A673 (cell line): ENCODE measurements at regions of chr5 and their contacts with region 1.

Region 1: GRCh38 chr5:123671042-123671441 is 159.1 kb downstream of the CSNK1G3 start:
- DNase-seq: peak; percentile 62
- H3K4me3 ChIP-seq: no peak overlapping the region
- H3K27ac ChIP-seq: no peak overlapping the region
- H3K4me1 ChIP-seq: peaks cover 7% of the 10 kb centered on the region
- H3K27me3 ChIP-seq: no peaks in the 10 kb centered on the region
- CTCF ChIP-seq: peak; percentile 87

Region 2: DNA sequence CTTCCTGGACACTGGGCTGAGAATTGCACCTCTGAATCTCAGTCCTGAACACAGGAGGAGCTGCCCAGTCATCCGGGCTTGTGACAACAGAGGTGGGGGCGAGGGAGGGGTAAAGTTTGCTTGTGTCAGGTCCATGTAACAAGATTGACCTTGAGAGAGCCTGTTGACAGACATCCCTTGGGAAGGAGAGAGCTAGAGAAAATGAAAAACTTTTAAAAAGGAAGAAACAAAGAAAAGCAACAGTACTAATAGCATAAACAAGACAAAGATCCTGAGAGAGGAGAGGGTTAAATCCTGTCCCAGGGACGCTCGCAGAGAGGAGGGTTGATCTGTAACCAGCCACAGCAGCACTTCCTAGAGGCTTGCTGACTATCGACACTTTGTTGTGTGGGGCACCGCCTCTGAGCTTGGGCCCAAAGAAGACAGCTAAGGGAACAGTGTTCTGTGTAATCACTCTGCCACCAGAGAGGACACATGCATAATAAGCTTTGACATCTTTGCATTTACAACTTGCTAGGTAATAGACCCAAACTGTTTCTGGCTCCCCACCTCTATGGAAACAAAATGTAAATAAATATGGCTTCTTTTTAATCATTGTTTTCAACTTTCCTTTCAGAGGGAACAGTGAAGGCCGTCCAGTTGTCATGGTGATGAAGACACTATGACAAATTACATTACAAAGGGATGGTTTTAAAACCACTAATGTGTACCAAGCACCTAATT is 204.7 kb after region 1 on chr5:
- CTCF ChIA-PET with region 1: no interaction called
- POLR2A ChIA-PET with region 1: no interaction called
- intact Hi-C with region 1: loop called (anchors 5 kb)
- DNase-seq: peak; percentile 83
- H3K4me3 ChIP-seq: peak overlapping the region; percentile 24
- H3K27ac ChIP-seq: peak overlapping the region; percentile 79
- H3K4me1 ChIP-seq: peaks cover 40% of the 10 kb centered on the region
- H3K27me3 ChIP-seq: no peaks in the 10 kb centered on the region
- CTCF ChIP-seq: 0 out of 2 replicates have a peak, but pooled peaks have one; percentile 16

Region 3: DNA sequence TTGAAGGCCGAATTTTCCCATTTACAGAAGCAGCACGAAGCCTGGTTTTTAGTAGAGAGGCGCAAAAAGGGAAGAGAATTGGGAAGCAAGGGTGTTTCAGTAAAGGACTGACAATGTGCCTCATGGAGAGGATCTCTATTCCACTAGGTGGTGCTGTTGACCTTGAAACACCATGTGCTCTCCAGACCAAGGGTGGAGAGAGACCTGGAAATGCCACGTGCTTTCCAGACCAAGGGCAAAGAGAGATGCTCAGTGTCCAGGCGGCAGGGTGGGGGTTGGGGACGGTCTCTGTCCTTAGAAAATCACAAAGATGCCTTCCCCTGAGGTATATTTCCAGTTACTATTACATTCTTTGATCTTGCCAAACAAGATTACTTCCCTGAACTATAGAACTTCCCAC is 266.2 kb after region 1 on chr5:
- CTCF ChIA-PET with region 1: no interaction called
- POLR2A ChIA-PET with region 1: no interaction called
- intact Hi-C with region 1: loop called (anchors 5 kb)
- DNase-seq: peak; percentile 64
- H3K4me3 ChIP-seq: no peak overlapping the region
- H3K27ac ChIP-seq: no peak overlapping the region
- H3K4me1 ChIP-seq: no peaks in the 10 kb centered on the region
- H3K27me3 ChIP-seq: no peaks in the 10 kb centered on the region
- CTCF ChIP-seq: peak; percentile 50; the same call in 1 of the 2 replicates

Region 4: DNA sequence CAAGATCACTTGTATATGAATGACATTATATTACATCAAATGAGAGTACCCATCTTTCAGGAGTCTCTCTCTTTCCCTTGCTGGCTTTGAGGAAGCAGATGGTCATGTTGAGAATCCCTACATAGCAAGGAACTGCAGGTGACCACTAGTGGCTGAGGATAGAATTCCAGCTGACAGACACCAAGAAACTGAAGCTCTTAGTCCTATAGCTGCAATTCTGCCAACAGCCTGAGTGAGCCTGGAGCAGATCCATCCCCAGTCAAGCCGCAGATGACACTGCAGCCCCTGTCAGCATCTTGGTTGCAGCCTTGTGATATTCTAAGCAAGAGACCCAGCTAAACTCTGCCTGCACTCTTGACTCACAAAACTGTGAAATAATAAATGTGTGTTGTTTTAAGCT is 372.4 kb after region 1 on chr5:
- CTCF ChIA-PET with region 1: no interaction called
- POLR2A ChIA-PET with region 1: no interaction called
- intact Hi-C with region 1: loop called (anchors 10 kb)
- DNase-seq: peak; percentile 23
- H3K4me3 ChIP-seq: no peak overlapping the region
- H3K27ac ChIP-seq: no peak overlapping the region
- H3K4me1 ChIP-seq: no peaks in the 10 kb centered on the region
- H3K27me3 ChIP-seq: no peaks in the 10 kb centered on the region
- CTCF ChIP-seq: peak; percentile 27; the same call in 1 of the 2 replicates

Region 5: DNA sequence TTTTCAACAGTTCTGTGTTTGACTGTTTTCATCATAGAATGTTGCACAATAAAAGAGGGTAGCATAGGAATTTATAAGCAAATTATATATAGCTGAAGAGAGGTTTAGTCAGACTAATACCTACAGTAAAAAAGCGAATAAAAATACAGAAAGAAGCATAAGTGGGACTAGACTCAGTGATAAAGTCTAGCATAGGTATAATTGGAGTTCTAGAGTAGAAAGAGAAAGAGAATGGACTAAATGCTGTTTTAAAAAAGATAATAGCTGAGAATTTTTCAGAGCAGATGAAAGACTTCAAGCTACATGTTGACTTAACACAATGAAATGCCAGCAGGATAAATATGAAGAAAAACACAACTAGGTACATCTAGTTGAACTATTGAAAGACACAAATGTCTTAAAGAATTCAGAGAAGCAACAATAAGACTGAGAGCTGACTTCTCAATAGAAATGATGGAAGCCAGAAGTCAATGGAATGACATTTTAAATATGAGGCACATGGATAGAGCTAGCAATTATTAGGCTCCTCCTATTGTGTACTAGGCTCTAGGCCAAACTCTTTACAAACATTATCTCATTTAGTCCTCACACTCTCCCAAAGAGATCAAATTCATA is 501.5 kb after region 1 on chr5:
- CTCF ChIA-PET with region 1: no interaction called
- POLR2A ChIA-PET with region 1: no interaction called
- intact Hi-C with region 1: no loop called
- DNase-seq: no peak
- H3K4me3 ChIP-seq: no peak overlapping the region
- H3K27ac ChIP-seq: no peak overlapping the region
- H3K4me1 ChIP-seq: no peaks in the 10 kb centered on the region
- H3K27me3 ChIP-seq: no peaks in the 10 kb centered on the region
- CTCF ChIP-seq: no peak

Region 6: DNA sequence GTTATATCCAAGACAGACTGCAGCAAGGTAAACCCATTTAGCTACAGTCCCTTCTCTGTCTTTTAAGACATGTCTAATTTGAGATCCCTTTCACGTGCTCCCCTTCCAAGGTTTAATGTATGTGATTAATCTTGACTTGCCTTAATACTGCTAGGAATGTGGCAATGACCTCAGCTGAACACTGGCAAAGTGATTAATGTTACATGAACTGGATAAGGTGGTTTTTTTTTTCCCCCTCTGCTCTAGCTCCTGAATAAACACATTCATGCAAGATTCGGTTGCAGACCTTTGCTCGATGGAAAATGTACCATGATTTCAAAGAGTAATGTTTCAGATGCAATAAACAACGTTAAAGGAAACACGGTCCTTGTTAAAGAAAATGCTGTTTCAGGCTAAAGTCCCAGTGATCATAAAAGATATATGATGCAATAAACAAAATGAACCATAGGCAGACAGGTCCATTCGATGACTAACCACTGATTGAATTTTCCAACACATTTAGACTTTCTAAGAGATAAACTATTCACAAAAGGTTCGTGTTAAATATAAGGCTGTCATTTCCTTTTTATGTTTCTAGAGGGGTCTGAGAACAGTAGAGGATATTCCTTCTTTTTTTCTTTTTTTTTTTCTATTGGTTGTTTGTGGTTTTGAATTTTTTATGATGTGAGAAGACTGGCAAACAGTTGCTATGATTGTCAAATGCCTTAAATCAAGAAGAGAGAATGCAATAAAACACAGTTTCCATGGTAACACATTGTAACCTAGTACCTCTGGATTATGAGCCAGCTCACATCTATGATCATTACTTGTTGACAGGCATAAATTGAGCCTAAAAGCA is 1120.1 kb after region 1 on chr5:
- CTCF ChIA-PET with region 1: interaction called, 17 read pairs
- POLR2A ChIA-PET with region 1: no interaction called
- intact Hi-C with region 1: no loop called
- DNase-seq: peak; percentile 11
- H3K4me3 ChIP-seq: no peak overlapping the region
- H3K27ac ChIP-seq: no peak overlapping the region
- H3K4me1 ChIP-seq: no peaks in the 10 kb centered on the region
- H3K27me3 ChIP-seq: no peaks in the 10 kb centered on the region
- CTCF ChIP-seq: no peak

Region 7: GRCh38 chr5:124902097-124902821 is 1231.2 kb after region 1 on chr5:
- CTCF ChIA-PET with region 1: no interaction called
- POLR2A ChIA-PET with region 1: no interaction called
- intact Hi-C with region 1: loop called (anchors 10 kb)
- DNase-seq: peak; percentile 77
- H3K4me3 ChIP-seq: no peak overlapping the region
- H3K27ac ChIP-seq: no peak overlapping the region
- H3K4me1 ChIP-seq: peaks cover 35% of the 10 kb centered on the region
- H3K27me3 ChIP-seq: no peaks in the 10 kb centered on the region
- CTCF ChIP-seq: no peak